ENCODE measurements at regions of chr2 and their contacts with region 1.

Region 1: GRCh38 chr2:201071479-201072200 is at the starts of genes HYCC2 and NDUFB3:
- DNase-seq: peak; percentile 95
- ATAC-seq: peak; percentile 94
- H3K4me3 Mint-ChIP-seq: peak within 1 kb of the TSS; percentile 97
- H3K27ac Mint-ChIP-seq: peak within 1 kb of the TSS; percentile 96
- H3K4me1 Mint-ChIP-seq: peaks cover 58% of the 10 kb centered on the region
- H3K27me3 Mint-ChIP-seq: no peaks in the 10 kb centered on the region
- total RNA-seq, gene HYCC2: 15.8 to 16.0 TPM
- total RNA-seq, gene NDUFB3: 126 to 150 TPM

Region 2: GRCh38 chr2:200578778-200579177 is 492.9 kb before region 1 on chr2:
- CTCF ChIA-PET with region 1: interaction called, 4 read pairs
- POLR2A ChIA-PET with region 1: no interaction called
- intact Hi-C with region 1: loop called in 1 of 2 experiments (anchors 2 kb)
- DNase-seq: no peak
- ATAC-seq: peak; percentile 83
- H3K4me3 Mint-ChIP-seq: no peak overlapping the region
- H3K27ac Mint-ChIP-seq: no peak overlapping the region
- H3K4me1 Mint-ChIP-seq: peaks cover 17% of the 10 kb centered on the region
- H3K27me3 Mint-ChIP-seq: no peaks in the 10 kb centered on the region

Region 3: DNA sequence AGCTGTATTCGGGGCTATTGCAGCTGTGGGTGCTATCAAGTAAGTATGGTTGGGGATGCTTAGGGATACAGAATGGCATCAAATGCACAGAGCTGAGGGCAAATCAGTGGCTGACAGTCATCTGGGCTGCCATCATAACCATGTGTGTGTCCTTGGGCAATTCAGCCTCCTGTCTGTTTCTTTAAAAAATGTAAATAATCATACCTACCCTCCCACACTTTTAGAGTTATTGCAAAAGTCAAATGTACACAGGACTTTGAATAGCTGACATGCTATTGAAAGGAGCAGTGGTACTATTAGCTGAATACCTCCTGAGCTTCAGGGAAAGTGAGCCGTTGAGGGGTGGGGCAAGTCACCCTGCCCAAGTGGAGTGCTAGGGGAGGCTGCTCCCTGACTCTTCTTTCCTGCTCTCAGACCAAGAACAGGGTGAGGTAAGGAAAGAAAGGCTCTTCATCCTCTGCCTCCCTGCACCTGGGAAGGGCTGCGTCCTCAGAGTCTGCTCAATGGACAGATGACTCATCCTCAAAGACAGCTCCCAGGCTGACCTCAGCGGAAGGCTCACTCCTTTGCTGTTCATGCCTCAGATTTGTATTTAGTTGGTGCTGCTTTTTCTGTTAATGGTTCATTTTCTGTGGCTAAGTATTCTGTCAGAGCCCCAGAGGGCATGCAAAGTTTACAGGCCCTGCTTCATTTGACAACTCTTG is 314.9 kb before region 1 on chr2:
- CTCF ChIA-PET with region 1: no interaction called
- POLR2A ChIA-PET with region 1: no interaction called
- intact Hi-C with region 1: no loop called
- DNase-seq: no peak
- ATAC-seq: no peak
- H3K4me3 Mint-ChIP-seq: no peak overlapping the region
- H3K27ac Mint-ChIP-seq: no peak overlapping the region
- H3K4me1 Mint-ChIP-seq: peaks cover 3% of the 10 kb centered on the region
- H3K27me3 Mint-ChIP-seq: peaks cover 15% of the 10 kb centered on the region

Region 4: DNA sequence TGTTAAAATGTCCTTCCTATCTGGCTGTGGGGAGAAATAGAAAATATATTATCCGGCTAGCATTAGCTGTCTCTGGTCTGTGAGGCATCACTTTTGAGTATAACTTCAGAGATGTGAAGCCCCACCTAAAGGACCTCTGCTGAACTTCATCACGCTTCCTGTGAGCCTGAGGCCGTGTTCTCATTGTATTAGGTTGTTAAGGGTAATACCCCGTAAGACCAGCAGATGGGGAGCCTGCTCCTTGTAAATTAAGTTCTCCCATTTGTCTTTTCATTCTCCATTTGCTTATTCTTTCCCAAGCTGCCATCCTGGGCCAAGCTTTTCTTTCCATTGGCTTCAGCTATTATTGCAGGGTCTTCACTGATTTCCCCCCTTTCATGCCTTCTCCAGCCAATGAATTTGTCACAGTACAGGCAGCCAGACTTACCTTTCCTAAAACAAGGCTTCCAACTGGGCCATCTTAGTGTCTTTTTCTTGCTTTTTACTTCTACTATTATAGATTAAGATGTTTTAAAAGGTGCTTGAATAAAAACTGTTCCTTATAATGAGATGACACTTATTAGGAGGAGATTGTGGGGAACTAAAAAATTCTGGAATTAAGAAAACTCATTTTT is 170.1 kb before region 1 on chr2:
- CTCF ChIA-PET with region 1: interaction called, 34 read pairs
- POLR2A ChIA-PET with region 1: no interaction called
- intact Hi-C with region 1: loop called (anchors 1 kb)
- DNase-seq: peak; percentile 83
- ATAC-seq: peak; percentile 100
- H3K4me3 Mint-ChIP-seq: no peak overlapping the region
- H3K27ac Mint-ChIP-seq: peak overlapping the region; percentile 73
- H3K4me1 Mint-ChIP-seq: peaks cover 2% of the 10 kb centered on the region
- H3K27me3 Mint-ChIP-seq: no peaks in the 10 kb centered on the region

Region 5: DNA sequence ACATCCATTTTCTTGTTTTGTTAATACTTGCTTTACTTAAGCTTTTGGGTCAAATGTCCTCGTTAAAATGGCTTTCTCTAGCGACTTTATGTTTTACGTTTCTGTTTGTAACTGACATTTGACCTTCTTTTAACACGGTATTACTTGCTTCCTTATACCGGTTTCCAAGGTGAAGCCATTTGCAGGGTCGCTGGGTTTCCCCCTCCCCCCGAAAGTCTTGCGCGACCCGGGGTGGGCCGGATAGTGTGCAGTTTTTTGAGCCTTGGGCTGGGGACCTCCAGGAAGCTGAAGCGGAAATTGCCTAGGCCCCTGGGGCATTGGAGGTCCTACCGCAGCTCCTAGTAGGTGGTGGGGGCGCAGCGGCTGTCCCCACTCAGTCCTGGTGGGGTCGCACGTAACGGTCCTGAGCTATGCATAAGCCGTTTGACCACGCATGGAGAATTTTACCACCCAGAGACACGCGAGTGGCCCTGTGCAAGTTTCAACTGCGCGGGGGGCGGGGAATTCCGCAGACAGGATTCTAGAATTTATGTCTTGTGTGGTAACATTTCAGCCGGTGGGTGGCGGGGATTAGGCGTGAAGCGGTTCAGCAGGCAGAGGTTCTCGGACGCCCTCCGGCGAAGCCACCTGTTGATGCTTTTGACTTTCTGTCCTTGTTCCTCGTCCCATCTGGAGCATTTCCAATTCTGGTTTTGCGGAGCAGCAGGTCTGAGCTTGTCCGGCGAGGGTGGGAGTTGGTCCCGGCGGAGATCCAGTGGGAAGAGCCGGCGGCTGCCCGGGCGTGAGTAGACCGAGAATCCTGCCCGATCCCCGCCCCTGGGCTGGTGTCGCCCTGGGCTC is 46.7 kb after region 1 on chr2:
- CTCF ChIA-PET with region 1: interaction called, 8 read pairs
- POLR2A ChIA-PET with region 1: interaction called, 6 read pairs
- intact Hi-C with region 1: loop called (anchors 1 kb)
- DNase-seq: peak; percentile 94
- ATAC-seq: peak; percentile 37
- H3K4me3 Mint-ChIP-seq: peak overlapping the region; percentile 98
- H3K27ac Mint-ChIP-seq: peak overlapping the region; percentile 100
- H3K4me1 Mint-ChIP-seq: peaks cover 42% of the 10 kb centered on the region
- H3K27me3 Mint-ChIP-seq: no peaks in the 10 kb centered on the region

Region 6: GRCh38 chr2:201158111-201158929 is 86.7 kb after region 1 on chr2:
- CTCF ChIA-PET with region 1: interaction called, 19 read pairs
- POLR2A ChIA-PET with region 1: no interaction called
- intact Hi-C with region 1: loop called (anchors 5 kb)
- DNase-seq: peak; percentile 59
- ATAC-seq: peak; percentile 66
- H3K4me3 Mint-ChIP-seq: no peak overlapping the region
- H3K27ac Mint-ChIP-seq: peak overlapping the region; percentile 64
- H3K4me1 Mint-ChIP-seq: peaks cover 23% of the 10 kb centered on the region
- H3K27me3 Mint-ChIP-seq: no peaks in the 10 kb centered on the region

Region 7: DNA sequence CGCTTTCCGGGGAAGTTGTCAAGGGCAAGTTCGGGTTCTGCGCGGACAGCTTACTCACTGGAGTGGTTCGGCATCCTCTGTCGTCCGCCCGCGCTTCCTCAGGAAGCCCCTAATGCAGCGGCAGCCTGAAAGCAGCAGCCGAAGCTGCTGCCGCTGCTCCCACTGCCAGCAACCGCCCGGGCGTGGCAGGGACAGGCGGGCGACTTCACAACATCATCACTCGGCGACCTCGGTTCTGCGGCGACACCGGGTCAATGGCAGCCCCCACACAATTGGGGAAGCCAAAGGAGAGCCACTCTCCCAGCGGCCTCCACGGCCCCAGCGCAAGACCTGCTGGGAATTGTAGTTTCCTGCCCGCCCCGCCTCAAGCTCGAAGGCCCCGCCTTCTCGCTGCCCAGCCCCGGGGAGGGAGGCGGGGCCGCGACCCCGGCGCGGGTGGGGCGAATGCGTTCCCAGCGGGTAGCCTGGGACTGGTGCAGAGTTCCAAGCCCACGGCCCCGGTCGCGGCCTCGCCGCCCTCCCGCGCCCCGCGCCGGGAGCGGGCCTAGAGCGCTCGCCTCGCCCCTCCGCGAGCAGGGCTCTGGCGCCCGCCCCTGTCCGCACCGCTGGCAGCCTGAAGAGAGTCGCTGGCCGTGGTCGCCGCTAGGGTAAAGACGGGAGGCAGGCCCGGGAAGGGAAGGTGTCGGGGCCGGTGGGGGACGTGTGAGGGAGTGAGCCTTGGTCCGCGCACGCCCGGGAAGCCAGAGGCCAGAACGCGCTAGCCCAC is 379.8 kb after region 1 on chr2 and contains the starts of genes STRADB and TRAK2:
- CTCF ChIA-PET with region 1: no interaction called
- POLR2A ChIA-PET with region 1: no interaction called
- intact Hi-C with region 1: loop called in 1 of 2 experiments (anchors 5 kb)
- DNase-seq: peak; percentile 98
- ATAC-seq: peak; percentile 91
- H3K4me3 Mint-ChIP-seq: peak within 1 kb of the TSS; percentile 95
- H3K27ac Mint-ChIP-seq: peak within 1 kb of the TSS; percentile 97
- H3K4me1 Mint-ChIP-seq: peaks cover 44% of the 10 kb centered on the region
- H3K27me3 Mint-ChIP-seq: no peaks in the 10 kb centered on the region
- total RNA-seq, gene STRADB: 20.5 to 21.8 TPM
- total RNA-seq, gene TRAK2: 22.5 to 25.6 TPM

Region 8: GRCh38 chr2:201600906-201601305 is 529.3 kb after region 1 on chr2:
- CTCF ChIA-PET with region 1: no interaction called
- POLR2A ChIA-PET with region 1: no interaction called
- intact Hi-C with region 1: no loop called
- DNase-seq: no peak
- ATAC-seq: no peak
- H3K4me3 Mint-ChIP-seq: no peak overlapping the region
- H3K27ac Mint-ChIP-seq: no peak overlapping the region
- H3K4me1 Mint-ChIP-seq: no peaks in the 10 kb centered on the region
- H3K27me3 Mint-ChIP-seq: peaks cover 14% of the 10 kb centered on the region

Measured in activated CD4-positive, alpha-beta T cell treated with anti-CD3 and anti-CD28 coated beads for 36 hours (primary cell).